Activated B cell treated with CpG ODN at 0.5 μM for 24 hours (primary cell): ENCODE measurements at regions of chr5 and their contacts with region 1.

Region 1: DNA sequence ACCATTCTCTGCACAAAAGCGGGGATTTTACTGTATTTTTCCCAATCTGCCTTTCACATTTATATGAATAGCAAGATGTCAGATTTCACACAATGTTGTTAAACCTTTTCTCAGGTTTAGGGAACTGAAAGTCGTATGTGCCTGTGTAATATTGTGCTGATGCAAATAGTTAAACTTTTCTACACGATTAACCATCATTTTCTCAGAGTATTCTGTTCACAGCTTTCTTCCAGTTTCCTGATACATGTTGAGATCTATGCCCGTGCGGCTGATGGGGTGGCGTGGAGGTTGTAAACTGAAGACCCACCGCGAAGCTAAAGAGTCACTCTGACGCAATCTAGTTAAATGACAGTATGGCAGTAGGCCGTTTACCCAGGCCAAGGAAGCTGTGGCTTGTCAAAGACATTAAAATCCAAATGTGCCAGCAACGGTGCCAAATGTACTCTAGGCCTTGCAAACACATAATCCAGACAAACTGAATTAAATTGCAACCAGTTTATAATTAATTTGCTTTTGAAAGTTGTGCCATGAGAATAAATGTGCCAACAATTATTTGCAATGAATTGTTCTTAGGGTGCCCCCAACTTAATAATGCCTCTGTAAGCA is 145.7 kb downstream of the EBF1 start:
- DNase-seq: peak; percentile 51
- ATAC-seq: peak; percentile 73
- H3K4me3 Mint-ChIP-seq: peak overlapping the region; percentile 62
- H3K27ac Mint-ChIP-seq: peak overlapping the region; percentile 96
- H3K4me1 Mint-ChIP-seq: peaks cover 97% of the 10 kb centered on the region
- H3K27me3 Mint-ChIP-seq: no peaks in the 10 kb centered on the region
- CTCF ChIP-seq: no peak

Region 2: GRCh38 chr5:158777647-158778350 is 176.2 kb before region 1 on chr5:
- CTCF ChIA-PET with region 1: no interaction called
- POLR2A ChIA-PET with region 1: interaction called, 3 read pairs
- intact Hi-C with region 1: loop called (anchors 5 kb)
- DNase-seq: no peak
- ATAC-seq: no peak
- H3K4me3 Mint-ChIP-seq: no peak overlapping the region
- H3K27ac Mint-ChIP-seq: peak overlapping the region; percentile 92
- H3K4me1 Mint-ChIP-seq: peaks cover 92% of the 10 kb centered on the region
- H3K27me3 Mint-ChIP-seq: no peaks in the 10 kb centered on the region
- CTCF ChIP-seq: no peak

Region 3: DNA sequence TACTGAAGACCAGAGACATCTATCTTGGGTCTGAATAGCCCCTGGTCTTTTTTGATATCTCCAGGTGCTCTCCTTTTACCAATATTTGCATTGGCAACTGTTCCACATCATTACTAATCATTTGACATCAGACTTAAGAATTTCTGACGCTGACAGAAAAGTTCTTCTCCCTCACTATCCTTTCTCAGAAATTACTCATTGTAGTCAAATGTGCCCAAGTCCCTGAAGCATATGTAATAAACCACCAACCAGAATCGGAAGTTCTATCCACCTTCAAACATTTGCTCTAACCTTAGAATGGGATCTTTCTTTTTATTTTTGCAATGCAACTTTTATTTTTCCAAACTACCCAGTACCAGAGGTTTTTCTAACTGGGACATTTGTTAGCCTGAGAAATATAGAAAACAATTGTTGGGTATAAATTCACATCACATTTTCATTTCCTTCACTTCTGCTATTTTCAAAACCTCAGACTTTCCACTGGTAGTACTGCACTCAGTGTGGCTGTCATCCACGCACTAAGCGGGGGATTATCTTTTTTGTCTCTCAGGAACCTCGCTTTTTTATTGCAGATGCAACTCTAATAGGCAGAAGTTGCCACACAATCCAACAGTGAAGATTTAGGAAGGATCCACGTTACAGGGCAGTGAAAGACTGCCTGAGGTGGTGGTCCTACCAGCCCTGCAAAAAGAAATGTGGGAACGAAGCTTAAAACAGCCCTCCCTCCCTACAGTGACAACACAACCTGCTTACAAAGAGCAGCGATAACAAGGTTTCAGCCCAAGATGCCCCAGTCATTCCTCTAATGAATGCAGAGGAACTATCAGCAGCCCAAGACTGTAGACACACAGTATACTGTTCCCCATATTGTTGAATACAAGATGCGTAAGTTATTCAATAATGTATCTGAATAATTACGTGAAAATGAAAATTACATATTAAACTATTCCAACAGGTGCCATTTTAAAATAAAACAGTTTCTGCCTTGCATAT is 55.6 kb before region 1 on chr5:
- CTCF ChIA-PET with region 1: interaction called, 5 read pairs
- POLR2A ChIA-PET with region 1: interaction called, 87 read pairs
- intact Hi-C with region 1: loop called (anchors 1 kb)
- DNase-seq: peak; percentile 33
- ATAC-seq: peak; percentile 74
- H3K4me3 Mint-ChIP-seq: peak overlapping the region; percentile 25
- H3K27ac Mint-ChIP-seq: peak overlapping the region; percentile 93
- H3K4me1 Mint-ChIP-seq: peaks cover 78% of the 10 kb centered on the region
- H3K27me3 Mint-ChIP-seq: no peaks in the 10 kb centered on the region
- CTCF ChIP-seq: no peak

Region 4: DNA sequence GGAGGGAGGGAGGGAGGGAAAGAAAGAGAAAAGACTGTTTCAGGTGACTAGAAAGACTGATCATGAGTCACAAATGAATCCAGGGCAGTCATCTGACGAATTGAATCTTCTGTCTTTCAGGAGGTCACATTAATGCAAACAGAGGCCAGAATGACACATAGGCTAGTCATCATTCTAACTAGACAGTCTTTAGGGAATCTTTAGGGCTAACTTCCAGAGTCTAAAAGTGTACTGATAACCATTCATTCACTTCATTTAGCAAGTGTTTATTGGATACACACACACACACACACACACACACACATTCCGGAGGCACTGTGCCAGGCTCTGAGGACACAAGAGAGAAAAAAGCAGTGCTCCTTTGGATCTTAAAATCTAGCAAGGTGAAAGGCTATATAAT is 11.0 kb before region 1 on chr5:
- CTCF ChIA-PET with region 1: interaction called, 4 read pairs
- POLR2A ChIA-PET with region 1: interaction called, 5 read pairs
- intact Hi-C with region 1: loop called (anchors 2 kb)
- DNase-seq: no peak
- ATAC-seq: peak; percentile 72
- H3K4me3 Mint-ChIP-seq: no peak overlapping the region
- H3K27ac Mint-ChIP-seq: peak overlapping the region; percentile 70
- H3K4me1 Mint-ChIP-seq: peaks cover 91% of the 10 kb centered on the region
- H3K27me3 Mint-ChIP-seq: no peaks in the 10 kb centered on the region
- CTCF ChIP-seq: no peak

Region 5: GRCh38 chr5:159003037-159004030 is 49.3 kb after region 1 on chr5:
- CTCF ChIA-PET with region 1: no interaction called
- POLR2A ChIA-PET with region 1: interaction called, 12 read pairs
- intact Hi-C with region 1: loop called (anchors 2 kb)
- DNase-seq: no peak
- ATAC-seq: no peak
- H3K4me3 Mint-ChIP-seq: peak overlapping the region; percentile 12
- H3K27ac Mint-ChIP-seq: peak overlapping the region; percentile 59
- H3K4me1 Mint-ChIP-seq: peaks cover 79% of the 10 kb centered on the region
- H3K27me3 Mint-ChIP-seq: no peaks in the 10 kb centered on the region
- CTCF ChIP-seq: no peak

Region 6: DNA sequence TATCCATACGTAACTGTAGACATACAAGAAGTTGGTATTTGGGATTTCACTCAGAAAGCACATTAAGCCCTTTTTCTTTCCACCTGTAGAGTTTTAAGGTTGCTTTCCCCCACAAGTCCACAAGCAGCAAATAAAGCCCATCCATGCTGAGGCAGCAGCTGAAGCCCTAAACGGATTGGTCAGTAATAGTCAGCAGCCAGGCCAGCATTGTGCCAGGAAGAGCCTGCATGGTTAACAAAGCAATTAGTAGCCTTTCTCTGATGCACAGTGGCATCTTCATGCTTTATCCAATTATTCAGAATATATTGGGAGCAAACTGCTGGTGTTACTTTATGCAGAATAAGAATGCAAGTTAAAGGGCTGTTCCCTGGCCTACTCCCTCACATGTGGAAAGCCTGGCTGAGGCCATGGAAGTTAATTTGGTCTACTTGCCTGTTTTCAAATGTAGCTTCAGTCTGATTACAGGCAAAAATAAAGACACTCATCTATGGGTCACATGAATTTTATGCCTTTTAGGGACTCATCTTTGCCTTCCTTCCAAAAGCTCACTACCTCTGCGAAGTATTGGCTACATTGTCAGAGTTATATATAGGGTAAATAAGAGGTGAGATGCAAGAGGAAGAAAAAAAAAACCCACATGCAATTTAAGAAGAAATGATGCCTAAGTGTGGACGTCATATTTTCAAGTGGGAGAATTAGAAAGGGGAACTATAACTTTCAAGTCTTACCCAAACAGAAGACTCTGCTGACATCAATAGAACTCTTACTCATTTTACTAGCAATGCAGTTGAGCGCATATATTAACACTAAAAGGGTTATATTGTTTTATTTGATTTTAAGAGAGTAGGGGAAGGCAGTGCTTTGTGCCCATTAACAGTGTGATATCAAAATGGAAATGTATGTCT is 129.8 kb after region 1 on chr5:
- CTCF ChIA-PET with region 1: no interaction called
- POLR2A ChIA-PET with region 1: interaction called, 12 read pairs
- intact Hi-C with region 1: loop called (anchors 1 kb)
- DNase-seq: no peak
- ATAC-seq: peak; percentile 93
- H3K4me3 Mint-ChIP-seq: peak overlapping the region; percentile 72
- H3K27ac Mint-ChIP-seq: peak overlapping the region; percentile 93
- H3K4me1 Mint-ChIP-seq: peaks cover 70% of the 10 kb centered on the region
- H3K27me3 Mint-ChIP-seq: no peaks in the 10 kb centered on the region
- CTCF ChIP-seq: no peak